ENCODE measurements at regions of chr5 and their contacts with region 1.

Region 1: GRCh38 chr5:76771705-76772405 is 47.0 kb upstream of the F2RL1 start:
- DNase-seq: no peak
- ATAC-seq: no peak
- H3K4me3 ChIP-seq: no peak overlapping the region
- H3K27ac ChIP-seq: no peak overlapping the region
- H3K4me1 ChIP-seq: peaks cover 0 to 11% (median 0%) of the 10 kb centered on the region in 9 donors
- H3K27me3 ChIP-seq: no peaks in the 10 kb centered on the region
- CTCF ChIP-seq: no peak

Region 2: GRCh38 chr5:76641514-76642120 is 130.2 kb before region 1 on chr5:
- intact Hi-C with region 1: loop called in 1 of 10 experiments (anchors 10 kb)
- DNase-seq: peak in 1 of 2 donors; percentile 70
- ATAC-seq: peak in 3 of 8 donors; percentile 38 to 57 (median 54)
- H3K4me3 ChIP-seq: no peak overlapping the region
- H3K27ac ChIP-seq: no peak overlapping the region
- H3K4me1 ChIP-seq: peaks cover 0 to 14% (median 0%) of the 10 kb centered on the region in 9 donors
- H3K27me3 ChIP-seq: no peaks in the 10 kb centered on the region
- CTCF ChIP-seq: peak; percentile 24 to 79 (median 70)

Region 3: GRCh38 chr5:76715736-76716455 is 56.0 kb before region 1 on chr5 and contains the start of gene F2R:
- intact Hi-C with region 1: loop called in 3 of 10 experiments (anchors 5 to 10 kb)
- DNase-seq: peak; percentile 67 to 72
- ATAC-seq: peak; percentile 77 to 90 (median 85)
- H3K4me3 ChIP-seq: peak within 1 kb of the TSS; percentile 68 to 98 (median 84)
- H3K27ac ChIP-seq: peak within 1 kb of the TSS; percentile 67 to 93 (median 83)
- H3K4me1 ChIP-seq: peaks cover 0 to 54% (median 32%) of the 10 kb centered on the region in 9 donors
- H3K27me3 ChIP-seq: peaks cover 0 to 42% (median 10%) of the 10 kb centered on the region in 7 donors
- CTCF ChIP-seq: peak; percentile 21 to 75 (median 56)
- total RNA-seq, gene F2R: 6.0 to 20.9 (median 11.1) TPM

Region 4: GRCh38 chr5:76733049-76733417 is 38.8 kb before region 1 on chr5:
- intact Hi-C with region 1: loop called in 1 of 10 experiments (anchors 5 kb)
- DNase-seq: no peak
- ATAC-seq: peak in 1 of 8 donors; percentile 17
- H3K4me3 ChIP-seq: no peak overlapping the region
- H3K27ac ChIP-seq: peak overlapping the region in 1 of 10 donors; percentile 75
- H3K4me1 ChIP-seq: peaks cover 0 to 22% (median 12%) of the 10 kb centered on the region in 9 donors
- H3K27me3 ChIP-seq: no peaks in the 10 kb centered on the region
- CTCF ChIP-seq: no peak